ENCODE measurements at regions of chr19 and their contacts with region 1.

Region 1: GRCh38 chr19:1863726-1864480 is 524 bp upstream of the KLF16 start:
- DNase-seq: peak; percentile 93
- H3K4me3 Mint-ChIP-seq: peak overlapping the region; percentile 75
- H3K27ac Mint-ChIP-seq: peak overlapping the region; percentile 72
- H3K4me1 Mint-ChIP-seq: peaks cover 34% of the 10 kb centered on the region
- H3K27me3 Mint-ChIP-seq: no peaks in the 10 kb centered on the region

Region 2: DNA sequence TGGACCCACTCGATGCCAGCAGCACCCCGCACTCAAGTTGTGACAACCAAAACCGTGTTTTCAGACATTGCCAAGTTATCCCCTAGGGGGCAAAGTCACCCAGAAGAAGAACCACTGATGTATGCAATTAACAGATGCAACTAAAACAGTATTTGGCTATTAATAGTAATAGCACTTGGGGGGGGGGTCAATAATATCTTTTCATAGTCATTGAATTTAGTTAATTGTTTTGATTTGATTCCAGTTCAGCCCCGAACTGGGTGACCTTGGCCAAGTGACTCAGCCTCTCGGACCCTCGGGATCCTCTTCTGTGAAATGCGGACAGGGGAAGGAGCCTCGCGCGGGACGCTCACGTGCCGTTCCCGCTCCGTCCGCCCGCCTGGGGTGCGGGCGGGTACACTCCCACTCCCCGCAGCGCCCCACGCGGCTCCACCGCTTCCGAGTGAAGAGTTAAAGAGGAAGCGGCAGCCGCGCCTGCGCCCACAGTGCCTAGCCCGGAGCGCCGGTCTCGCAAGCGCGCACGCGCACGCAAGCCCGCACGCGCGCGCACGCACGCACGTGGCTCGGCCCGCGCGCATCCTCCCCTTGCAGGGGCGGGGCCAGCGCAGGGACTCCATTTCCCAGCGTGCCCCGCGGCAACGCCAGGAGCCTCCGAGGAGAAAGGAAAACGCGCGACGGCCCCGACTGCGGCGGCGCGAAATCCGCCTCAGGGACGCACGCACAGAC is 457.0 kb before region 1 on chr19:
- CTCF ChIA-PET with region 1: no interaction called
- intact Hi-C with region 1: loop called (anchors 5 kb)
- DNase-seq: peak; percentile 98
- H3K4me3 Mint-ChIP-seq: peak overlapping the region; percentile 69
- H3K27ac Mint-ChIP-seq: peak overlapping the region; percentile 81
- H3K4me1 Mint-ChIP-seq: peaks cover 43% of the 10 kb centered on the region
- H3K27me3 Mint-ChIP-seq: peaks cover 5% of the 10 kb centered on the region

Region 3: DNA sequence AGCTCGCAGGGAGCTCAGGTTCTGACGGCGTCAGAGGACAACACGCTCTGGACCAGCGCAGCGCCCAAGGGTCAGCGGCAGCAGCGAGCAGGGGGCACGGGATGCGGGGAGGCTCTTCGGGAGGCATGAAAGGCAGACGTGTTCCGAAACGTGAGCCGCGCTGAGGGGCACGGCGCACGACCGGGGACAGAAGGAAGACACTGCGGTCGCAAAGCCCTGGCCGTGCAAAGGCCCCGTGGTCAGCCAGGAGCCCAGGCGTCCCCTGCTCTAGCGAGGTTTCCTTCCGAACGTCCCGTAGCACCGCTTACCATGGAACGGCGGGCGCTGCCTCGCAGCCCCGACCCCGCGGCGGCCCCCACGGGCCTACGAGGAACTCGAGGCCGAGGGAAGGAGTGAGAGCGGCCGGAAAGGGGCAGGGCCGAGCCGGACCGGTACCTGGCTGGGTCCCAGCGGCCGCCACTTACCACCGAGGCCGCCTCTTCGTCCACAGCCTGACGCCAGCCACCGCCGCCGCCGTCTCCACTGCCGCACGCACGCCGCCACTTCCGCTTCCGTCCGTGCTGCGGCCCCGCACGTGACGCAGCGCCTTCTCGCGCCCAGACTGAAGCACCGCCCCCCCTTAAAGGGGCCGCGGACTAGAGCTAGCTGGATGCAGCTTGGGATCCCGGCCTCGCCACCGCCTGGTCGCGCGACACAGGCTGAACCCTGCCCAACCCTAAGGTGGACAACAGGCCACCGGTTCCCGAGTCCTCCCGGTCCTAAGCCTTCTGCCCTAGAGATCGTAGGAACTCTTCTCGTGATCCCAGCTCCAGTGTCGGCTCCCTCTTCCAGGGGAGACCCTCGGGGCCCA is 12.0 kb after region 1 on chr19:
- CTCF ChIA-PET with region 1: no interaction called
- intact Hi-C with region 1: loop called (anchors 1 kb)
- DNase-seq: peak; percentile 91
- H3K4me3 Mint-ChIP-seq: peak overlapping the region; percentile 100
- H3K27ac Mint-ChIP-seq: peak overlapping the region; percentile 96
- H3K4me1 Mint-ChIP-seq: peaks cover 24% of the 10 kb centered on the region
- H3K27me3 Mint-ChIP-seq: no peaks in the 10 kb centered on the region

Region 4: DNA sequence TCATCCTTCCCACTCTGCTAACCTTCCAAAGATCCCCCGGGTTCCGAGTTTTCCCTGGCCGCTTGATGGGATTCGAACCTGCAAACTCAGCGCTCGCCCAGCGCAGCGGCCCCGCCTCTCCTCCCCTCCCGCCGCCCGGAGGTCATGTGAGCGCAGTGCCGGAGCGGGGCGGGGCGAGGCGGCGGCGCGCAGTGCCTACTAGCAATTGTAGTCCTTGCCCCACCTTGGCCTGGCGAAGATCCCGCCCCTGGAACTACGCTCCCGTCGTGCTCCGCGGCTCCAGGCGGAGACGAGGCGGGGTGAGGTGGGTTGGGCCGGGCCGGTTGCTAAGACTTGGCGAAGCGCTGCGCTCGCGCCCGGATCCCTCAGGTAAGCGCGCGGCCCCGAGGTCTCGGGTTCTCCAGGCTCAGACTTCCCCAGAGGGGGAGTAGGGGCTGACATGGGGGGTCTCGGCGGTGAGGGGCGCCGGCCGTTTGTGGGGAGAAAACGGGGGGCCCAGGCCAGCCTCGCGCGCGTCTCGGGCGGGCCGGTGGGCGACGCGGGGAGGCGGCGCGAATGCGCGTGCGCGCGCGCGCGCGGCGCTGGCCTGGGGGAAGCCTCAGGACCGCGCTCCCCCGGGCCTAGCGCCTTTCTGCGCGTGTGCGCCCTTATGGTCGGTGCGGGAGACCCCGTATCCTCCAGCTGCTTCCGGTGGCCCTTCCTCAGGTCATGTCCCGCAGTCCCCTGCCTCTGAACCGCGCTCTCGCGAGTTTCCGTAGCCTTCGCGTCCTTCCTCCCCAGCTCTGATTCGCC is 41.4 kb after region 1 on chr19 and contains the starts of genes ADAT3 and SCAMP4:
- CTCF ChIA-PET with region 1: interaction called, 6 read pairs
- intact Hi-C with region 1: loop called (anchors 1 kb)
- DNase-seq: peak; percentile 99
- H3K4me3 Mint-ChIP-seq: peak within 1 kb of the TSS; percentile 89
- H3K27ac Mint-ChIP-seq: peak within 1 kb of the TSS; percentile 89
- H3K4me1 Mint-ChIP-seq: peaks cover 46% of the 10 kb centered on the region
- H3K27me3 Mint-ChIP-seq: no peaks in the 10 kb centered on the region
- total RNA-seq, gene ADAT3: 3.0 to 3.4 TPM
- total RNA-seq, gene SCAMP4: 12.1 to 14.5 TPM

Region 5: GRCh38 chr19:2168619-2169424 is 304.9 kb after region 1 on chr19:
- CTCF ChIA-PET with region 1: no interaction called
- intact Hi-C with region 1: loop called (anchors 5 kb)
- DNase-seq: peak; percentile 71
- H3K4me3 Mint-ChIP-seq: peak overlapping the region; percentile 12
- H3K27ac Mint-ChIP-seq: peak overlapping the region; percentile 72
- H3K4me1 Mint-ChIP-seq: peaks cover 57% of the 10 kb centered on the region
- H3K27me3 Mint-ChIP-seq: no peaks in the 10 kb centered on the region